Activated CD4-positive, alpha-beta T cell treated with anti-CD3 and anti-CD28 coated beads for 36 hours (primary cell): ENCODE measurements at regions of chr19 and their contacts with region 1.

Region 1: GRCh38 chr19:16111160-16111908 is at the start of gene RAB8A:
- DNase-seq: peak; percentile 99
- ATAC-seq: peak; percentile 96
- H3K4me3 Mint-ChIP-seq: peak within 1 kb of the TSS; percentile 96
- H3K27ac Mint-ChIP-seq: peak within 1 kb of the TSS; percentile 97
- H3K4me1 Mint-ChIP-seq: peaks cover 39% of the 10 kb centered on the region
- H3K27me3 Mint-ChIP-seq: no peaks in the 10 kb centered on the region
- total RNA-seq, gene RAB8A: 165 to 218 TPM

Region 2: DNA sequence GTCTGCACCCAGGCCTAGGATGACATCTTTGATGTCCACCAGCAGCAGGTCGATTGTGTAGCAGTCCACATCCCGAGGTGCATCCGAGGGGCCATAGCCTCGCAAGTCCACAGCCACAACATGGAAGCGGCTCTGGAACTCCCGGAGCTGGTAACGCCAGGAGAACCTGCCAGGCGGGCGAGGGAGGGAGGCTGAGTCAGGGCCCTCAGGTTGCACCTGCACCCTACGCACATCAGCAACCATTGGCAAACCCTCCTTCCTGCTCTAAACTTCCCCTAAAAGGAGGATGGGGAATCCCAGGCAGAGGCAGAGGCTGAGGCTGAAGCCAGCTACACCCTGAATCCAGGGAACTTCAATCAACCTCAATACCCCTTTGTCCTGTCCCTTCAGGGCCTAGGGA is 880.1 kb before region 1 on chr19:
- CTCF ChIA-PET with region 1: no interaction called
- POLR2A ChIA-PET with region 1: no interaction called
- intact Hi-C with region 1: no loop called
- DNase-seq: no peak
- ATAC-seq: no peak
- H3K4me3 Mint-ChIP-seq: no peak overlapping the region
- H3K27ac Mint-ChIP-seq: no peak overlapping the region
- H3K4me1 Mint-ChIP-seq: peaks cover 11% of the 10 kb centered on the region
- H3K27me3 Mint-ChIP-seq: peaks cover 22% of the 10 kb centered on the region

Region 3: GRCh38 chr19:15379083-15379995 is 732.0 kb before region 1 on chr19 and contains the start of gene AKAP8:
- CTCF ChIA-PET with region 1: no interaction called
- POLR2A ChIA-PET with region 1: no interaction called
- intact Hi-C with region 1: loop called in 1 of 2 experiments (anchors 5 kb)
- DNase-seq: peak; percentile 99
- ATAC-seq: peak; percentile 91
- H3K4me3 Mint-ChIP-seq: peak within 1 kb of the TSS; percentile 88
- H3K27ac Mint-ChIP-seq: peak within 1 kb of the TSS; percentile 100
- H3K4me1 Mint-ChIP-seq: peaks cover 37% of the 10 kb centered on the region
- H3K27me3 Mint-ChIP-seq: no peaks in the 10 kb centered on the region
- total RNA-seq, gene AKAP8: 47.9 to 54.3 TPM

Region 4: GRCh38 chr19:16041299-16041990 is 69.9 kb before region 1 on chr19:
- CTCF ChIA-PET with region 1: interaction called, 7 read pairs
- POLR2A ChIA-PET with region 1: no interaction called
- intact Hi-C with region 1: loop called in 1 of 2 experiments (anchors 1 kb)
- DNase-seq: peak; percentile 87
- ATAC-seq: peak; percentile 85
- H3K4me3 Mint-ChIP-seq: no peak overlapping the region
- H3K27ac Mint-ChIP-seq: no peak overlapping the region
- H3K4me1 Mint-ChIP-seq: peaks cover 4% of the 10 kb centered on the region
- H3K27me3 Mint-ChIP-seq: peaks cover 2% of the 10 kb centered on the region

Region 5: GRCh38 chr19:16076154-16076957 is 35.0 kb before region 1 on chr19 and contains the start of gene TPM4:
- CTCF ChIA-PET with region 1: interaction called, 5 read pairs
- POLR2A ChIA-PET with region 1: interaction called, 9 read pairs
- intact Hi-C with region 1: loop called (anchors 1 kb)
- DNase-seq: peak; percentile 94
- ATAC-seq: peak; percentile 42
- H3K4me3 Mint-ChIP-seq: peak within 1 kb of the TSS; percentile 99
- H3K27ac Mint-ChIP-seq: peak within 1 kb of the TSS; percentile 98
- H3K4me1 Mint-ChIP-seq: peaks cover 64% of the 10 kb centered on the region
- H3K27me3 Mint-ChIP-seq: no peaks in the 10 kb centered on the region
- total RNA-seq, gene TPM4: 362 to 416 TPM

Region 6: GRCh38 chr19:16185123-16185767 is 73.9 kb after region 1 on chr19 and contains the start of gene FAM32A:
- CTCF ChIA-PET with region 1: interaction called, 4 read pairs
- POLR2A ChIA-PET with region 1: interaction called, 5 read pairs
- intact Hi-C with region 1: loop called (anchors 1 kb)
- DNase-seq: peak; percentile 99
- ATAC-seq: peak; percentile 98
- H3K4me3 Mint-ChIP-seq: peak within 1 kb of the TSS; percentile 100
- H3K27ac Mint-ChIP-seq: peak within 1 kb of the TSS; percentile 97
- H3K4me1 Mint-ChIP-seq: peaks cover 26% of the 10 kb centered on the region
- H3K27me3 Mint-ChIP-seq: no peaks in the 10 kb centered on the region
- total RNA-seq, gene FAM32A: 46.3 to 48.2 TPM

Region 7: DNA sequence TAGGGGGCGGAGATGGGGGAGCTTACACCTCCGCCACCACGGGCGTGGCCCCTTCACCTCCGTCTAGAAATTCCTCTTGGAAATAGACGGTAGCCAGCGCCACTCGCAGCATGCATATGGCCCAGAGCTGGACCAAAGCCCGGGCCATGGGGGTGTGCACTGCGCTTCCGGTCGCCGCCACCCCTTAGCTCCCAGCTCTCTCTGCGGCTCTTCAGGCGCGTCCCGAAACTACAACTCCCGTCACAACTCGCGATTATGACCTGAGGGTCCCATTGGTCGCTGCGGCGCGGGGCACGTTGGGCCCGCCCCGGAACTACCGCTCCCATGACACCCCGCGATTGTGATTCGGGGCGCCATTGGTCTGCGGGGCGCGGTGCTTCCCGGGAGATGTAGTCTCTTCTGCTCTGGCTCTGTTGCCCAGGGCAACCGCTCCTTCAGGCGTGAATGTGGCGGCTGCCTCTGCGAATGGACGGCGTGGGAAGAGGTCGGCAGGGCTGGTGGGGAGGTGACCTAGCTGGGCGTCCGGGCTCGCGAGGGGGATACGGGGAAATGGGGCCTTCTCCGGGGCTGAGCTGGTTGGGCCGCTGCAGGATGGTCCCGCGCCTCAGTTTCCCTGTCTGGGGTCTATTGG is 384.8 kb after region 1 on chr19 and contains the starts of genes C19orf44 and CALR3:
- CTCF ChIA-PET with region 1: no interaction called
- POLR2A ChIA-PET with region 1: no interaction called
- intact Hi-C with region 1: loop called in 1 of 2 experiments (anchors 1 kb)
- DNase-seq: peak; percentile 99
- ATAC-seq: peak; percentile 99
- H3K4me3 Mint-ChIP-seq: peak within 1 kb of the TSS; percentile 89
- H3K27ac Mint-ChIP-seq: peak within 1 kb of the TSS; percentile 79
- H3K4me1 Mint-ChIP-seq: peaks cover 13% of the 10 kb centered on the region
- H3K27me3 Mint-ChIP-seq: no peaks in the 10 kb centered on the region
- total RNA-seq, gene C19orf44: 2.9 to 4.0 TPM
- total RNA-seq, gene CALR3: not detected

Region 8: GRCh38 chr19:17323964-17324332 is 1212.6 kb after region 1 on chr19:
- CTCF ChIA-PET with region 1: no interaction called
- POLR2A ChIA-PET with region 1: no interaction called
- intact Hi-C with region 1: no loop called
- DNase-seq: peak; percentile 45
- ATAC-seq: peak; percentile 43
- H3K4me3 Mint-ChIP-seq: no peak overlapping the region
- H3K27ac Mint-ChIP-seq: no peak overlapping the region
- H3K4me1 Mint-ChIP-seq: peaks cover 6% of the 10 kb centered on the region
- H3K27me3 Mint-ChIP-seq: no peaks in the 10 kb centered on the region